ENCODE measurements at regions of chr19 and their contacts with region 1.

Region 1: DNA sequence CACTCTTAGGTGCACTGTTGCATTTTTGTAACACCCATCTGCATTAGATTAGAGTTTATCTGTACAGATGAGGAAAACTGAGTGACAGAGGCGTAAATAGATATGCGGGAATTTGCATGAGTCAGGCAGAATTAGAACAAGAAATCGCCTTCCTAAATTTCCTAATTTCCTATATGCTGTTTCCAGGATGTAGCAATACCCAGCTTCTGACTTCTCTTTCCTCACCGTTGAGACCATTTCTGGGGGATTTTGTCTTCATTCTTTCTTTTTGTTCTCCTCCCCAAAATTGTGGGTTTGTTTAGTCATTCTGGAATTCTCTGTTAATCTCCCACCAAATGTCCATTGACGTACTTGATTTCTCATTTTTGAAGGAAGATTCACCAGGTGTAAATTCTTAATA is 10.6 kb upstream of the ZNF792 start:
- DNase-seq: no peak
- ATAC-seq: no peak
- H3K4me3 Mint-ChIP-seq: no peak overlapping the region
- H3K27ac Mint-ChIP-seq: no peak overlapping the region
- H3K4me1 Mint-ChIP-seq: peaks cover 23% of the 10 kb centered on the region
- H3K27me3 Mint-ChIP-seq: peaks cover 5% of the 10 kb centered on the region

Region 2: GRCh38 chr19:34963573-34964409 is 10.9 kb before region 1 on chr19 and contains the start of gene ZNF792:
- CTCF ChIA-PET with region 1: interaction called, 12 read pairs
- DNase-seq: peak; percentile 68
- ATAC-seq: peak; percentile 86
- H3K4me3 Mint-ChIP-seq: peak within 1 kb of the TSS; percentile 85
- H3K27ac Mint-ChIP-seq: peak within 1 kb of the TSS; percentile 86
- H3K4me1 Mint-ChIP-seq: peaks cover 22% of the 10 kb centered on the region
- H3K27me3 Mint-ChIP-seq: no peaks in the 10 kb centered on the region
- total RNA-seq, gene ZNF792: 13.5 to 15.3 TPM

Region 3: GRCh38 chr19:34985249-34986022 is 10.8 kb after region 1 on chr19:
- CTCF ChIA-PET with region 1: interaction called, 11 read pairs
- DNase-seq: peak; percentile 56
- ATAC-seq: peak; percentile 83
- H3K4me3 Mint-ChIP-seq: peak overlapping the region; percentile 51
- H3K27ac Mint-ChIP-seq: peak overlapping the region; percentile 78
- H3K4me1 Mint-ChIP-seq: peaks cover 23% of the 10 kb centered on the region
- H3K27me3 Mint-ChIP-seq: peaks cover 3% of the 10 kb centered on the region

Region 4: DNA sequence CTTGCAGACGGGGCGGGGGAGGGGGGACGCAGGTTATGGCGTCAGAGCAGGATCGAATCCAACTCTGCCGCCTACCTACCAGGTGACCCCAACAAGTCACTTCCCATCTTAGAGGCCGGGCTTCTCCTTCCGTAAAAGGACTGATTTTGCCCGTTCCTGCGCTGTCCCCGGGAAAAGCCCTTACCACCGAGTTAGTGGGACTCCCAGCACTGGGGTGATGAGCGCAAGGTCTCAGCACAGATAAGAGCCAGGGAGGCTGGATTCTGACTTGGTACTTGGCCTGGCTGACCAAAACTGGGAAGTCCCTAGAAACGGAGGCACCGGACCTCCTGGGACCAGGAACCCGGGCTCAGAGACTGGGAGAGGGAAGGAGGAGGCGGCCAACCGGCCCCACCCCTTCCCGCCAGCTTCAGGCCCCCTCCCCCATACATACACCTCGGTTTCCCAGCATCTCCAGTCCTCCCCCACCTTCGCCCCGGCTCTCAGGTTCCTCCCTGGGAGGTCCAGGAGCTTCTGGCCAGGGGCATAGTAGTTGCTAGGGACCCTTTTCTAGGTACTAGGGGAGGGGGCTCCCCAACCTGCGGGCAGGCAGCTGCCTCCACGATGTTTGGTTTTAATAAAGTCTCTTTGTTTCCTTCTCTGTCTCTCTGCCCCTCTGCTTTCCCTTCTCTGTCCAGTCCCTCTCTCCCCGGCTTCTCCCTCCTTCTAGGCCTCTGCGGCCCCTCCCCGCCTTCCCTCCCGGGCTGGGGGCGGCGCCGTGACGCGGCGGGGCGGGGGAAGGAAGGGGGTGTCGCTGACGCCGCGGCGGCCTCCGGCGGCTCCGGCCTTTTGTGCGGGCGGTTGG is 25.1 kb after region 1 on chr19 and contains the start of gene GRAMD1A:
- CTCF ChIA-PET with region 1: interaction called, 18 read pairs
- DNase-seq: peak; percentile 82
- ATAC-seq: peak; percentile 60
- H3K4me3 Mint-ChIP-seq: peak within 1 kb of the TSS; percentile 91
- H3K27ac Mint-ChIP-seq: peak within 1 kb of the TSS; percentile 92
- H3K4me1 Mint-ChIP-seq: peaks cover 71% of the 10 kb centered on the region
- H3K27me3 Mint-ChIP-seq: no peaks in the 10 kb centered on the region
- total RNA-seq, gene GRAMD1A: 109 to 127 TPM

Region 5: GRCh38 chr19:35006342-35007018 is 31.8 kb after region 1 on chr19:
- CTCF ChIA-PET with region 1: interaction called, 97 read pairs
- DNase-seq: no peak
- ATAC-seq: no peak
- H3K4me3 Mint-ChIP-seq: no peak overlapping the region
- H3K27ac Mint-ChIP-seq: peak overlapping the region; percentile 20
- H3K4me1 Mint-ChIP-seq: peaks cover 49% of the 10 kb centered on the region
- H3K27me3 Mint-ChIP-seq: no peaks in the 10 kb centered on the region

Region 6: DNA sequence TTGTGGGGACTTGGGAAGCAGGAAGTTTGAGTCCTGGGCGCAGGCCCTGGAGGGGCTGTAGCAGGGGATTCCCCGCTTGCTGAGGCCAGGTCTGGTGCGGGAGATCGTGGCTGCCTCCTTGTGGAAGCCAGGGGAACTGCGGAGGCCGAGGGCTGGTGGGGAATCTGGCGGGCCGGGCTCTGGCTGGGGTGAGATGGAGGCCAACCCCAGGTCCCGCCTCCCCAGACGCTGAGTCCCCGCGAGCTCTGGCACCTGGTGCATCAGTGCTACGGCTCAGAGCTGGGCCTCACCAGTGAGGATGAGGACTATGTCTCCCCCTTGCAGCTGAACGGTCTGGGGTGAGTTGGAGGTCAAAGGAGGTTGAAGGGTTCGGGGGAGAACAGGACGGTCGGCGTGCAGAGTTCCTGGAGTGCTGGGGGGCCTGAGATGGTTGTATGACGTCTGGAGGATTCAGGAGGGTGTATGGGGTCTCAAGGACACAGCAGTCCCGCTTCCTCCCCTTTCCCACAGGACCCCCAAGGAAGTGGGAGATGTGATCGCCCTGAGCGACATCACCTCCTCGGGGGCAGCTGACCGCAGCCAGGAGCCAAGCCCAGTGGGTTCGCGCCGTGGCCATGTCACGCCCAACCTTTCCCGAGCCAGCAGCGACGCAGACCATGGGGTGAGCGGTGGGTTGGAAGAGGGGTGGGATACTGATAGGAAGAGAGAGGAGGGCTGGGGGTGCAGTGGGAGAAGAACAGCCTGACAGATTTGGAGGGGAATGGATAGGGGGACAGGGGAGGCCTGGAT is 38.6 kb after region 1 on chr19:
- CTCF ChIA-PET with region 1: interaction called, 97 read pairs
- DNase-seq: peak; percentile 83
- ATAC-seq: peak; percentile 67
- H3K4me3 Mint-ChIP-seq: no peak overlapping the region
- H3K27ac Mint-ChIP-seq: peak overlapping the region; percentile 56
- H3K4me1 Mint-ChIP-seq: peaks cover 52% of the 10 kb centered on the region
- H3K27me3 Mint-ChIP-seq: no peaks in the 10 kb centered on the region